ENCODE measurements at regions of chr2 and their contacts with region 1.

Region 1: DNA sequence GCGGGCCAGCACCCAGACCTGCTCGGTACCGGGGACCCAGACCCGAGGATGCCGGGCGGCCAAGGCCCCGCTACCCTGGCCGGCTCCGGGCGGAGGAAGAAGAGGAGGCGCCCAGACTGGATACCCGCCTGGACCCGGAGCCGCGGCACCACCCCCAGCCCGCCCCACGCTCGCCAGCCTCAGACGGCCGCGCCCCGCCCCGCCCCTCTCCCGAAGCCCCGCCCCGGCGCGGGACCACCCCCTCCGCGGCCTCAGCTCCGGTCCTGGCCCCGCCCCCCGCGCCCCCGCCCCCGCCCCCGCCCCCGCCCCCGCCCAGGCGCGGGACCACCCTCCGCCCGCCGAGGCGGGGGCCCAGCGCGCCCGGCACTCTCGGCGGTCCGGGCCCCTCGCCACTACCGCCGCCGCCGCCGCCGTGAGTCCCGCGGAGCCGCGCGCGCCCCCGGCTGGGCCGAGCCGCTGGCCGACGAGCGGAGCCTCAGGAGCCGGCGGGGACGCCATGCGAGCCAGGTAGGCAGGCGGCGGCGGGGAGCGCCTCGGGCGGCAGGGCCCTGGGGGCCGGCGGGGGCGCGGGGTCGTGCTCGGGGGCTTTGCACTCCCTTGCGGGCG is at the start of gene SH3BP4:
- DNase-seq: peak; percentile 54
- ATAC-seq: peak; percentile 79
- H3K4me3 ChIP-seq: peak within 1 kb of the TSS; percentile 74 to 93 (median 76)
- H3K27ac ChIP-seq: peak within 1 kb of the TSS; percentile 56
- H3K4me1 ChIP-seq: peaks cover 57% of the 10 kb centered on the region
- H3K27me3 ChIP-seq: no peaks in the 10 kb centered on the region; a peak in 2 of 5 replicates
- CTCF ChIP-seq: no peak
- EP300 ChIP-seq: no peak
- POLR2A ChIP-seq: peak in 1 of 2 experiments; percentile 50; a peak in 2 of 4 replicates
- RAD21 ChIP-seq: peak; percentile 58; the same call in 1 of the 2 replicates
- total RNA-seq, gene SH3BP4: 34.6 and 44.3 TPM in 2 replicates

Region 2: GRCh38 chr2:234550511-234551107 is 401.2 kb before region 1 on chr2:
- CTCF ChIA-PET with region 1: no interaction called
- POLR2A ChIA-PET with region 1: no interaction called
- in situ Hi-C with region 1: no loop called
- intact Hi-C with region 1: loop called (anchors 2 kb)
- DNase-seq: peak; percentile 73
- ATAC-seq: peak; percentile 88
- H3K4me3 ChIP-seq: no peak overlapping the region
- H3K27ac ChIP-seq: no peak overlapping the region
- H3K4me1 ChIP-seq: peaks cover 33% of the 10 kb centered on the region
- H3K27me3 ChIP-seq: peaks cover 2 to 33% of the 10 kb centered on the region in 2 experiments; a peak in 4 of 5 replicates
- CTCF ChIP-seq: peak; percentile 99
- EP300 ChIP-seq: no peak
- POLR2A ChIP-seq: no peak
- RAD21 ChIP-seq: peak; percentile 97

Region 3: DNA sequence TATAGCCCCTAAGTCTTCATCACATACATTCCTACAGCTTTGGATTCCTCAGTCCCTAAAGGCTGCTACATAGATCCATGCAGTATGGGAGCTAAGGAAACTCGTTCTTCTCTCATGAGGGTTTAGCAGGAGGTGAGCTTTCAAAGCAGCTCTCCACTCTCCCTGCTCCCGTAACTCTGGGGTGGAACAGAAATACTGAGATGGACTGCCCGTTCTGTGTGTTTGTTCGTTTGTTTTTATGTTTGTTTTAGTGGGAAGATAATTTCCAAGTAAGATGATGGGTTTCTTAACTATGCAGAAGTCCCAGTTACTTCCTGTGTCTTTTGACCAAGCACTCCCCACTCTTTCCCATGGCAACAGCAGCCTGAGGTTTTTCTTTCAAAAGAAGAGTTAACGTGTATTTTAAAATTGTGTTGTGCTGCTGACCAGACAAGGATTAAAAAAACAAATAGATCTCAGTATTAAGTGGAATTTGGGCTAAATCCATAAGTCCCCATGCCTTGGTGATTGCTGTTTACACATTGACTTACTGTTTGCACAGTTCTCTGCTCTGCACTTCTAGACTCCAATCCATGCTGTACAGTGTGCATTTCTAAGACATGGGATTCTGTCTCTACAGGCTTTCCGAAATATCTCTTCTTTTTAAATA is 156.4 kb before region 1 on chr2:
- CTCF ChIA-PET with region 1: no interaction called
- POLR2A ChIA-PET with region 1: no interaction called
- in situ Hi-C with region 1: no loop called
- intact Hi-C with region 1: loop called (anchors 5 kb)
- DNase-seq: peak; percentile 73
- ATAC-seq: peak; percentile 95
- H3K4me3 ChIP-seq: peak overlapping the region in 2 of 3 experiments; percentile 42 to 44; a peak in 2 of 6 replicates
- H3K27ac ChIP-seq: peak overlapping the region; percentile 48
- H3K4me1 ChIP-seq: peaks cover 51% of the 10 kb centered on the region
- H3K27me3 ChIP-seq: no peaks in the 10 kb centered on the region
- CTCF ChIP-seq: no peak
- EP300 ChIP-seq: peak in 1 of 2 experiments; percentile 84; a peak in 2 of 4 replicates
- POLR2A ChIP-seq: no peak
- RAD21 ChIP-seq: no peak

Region 4: DNA sequence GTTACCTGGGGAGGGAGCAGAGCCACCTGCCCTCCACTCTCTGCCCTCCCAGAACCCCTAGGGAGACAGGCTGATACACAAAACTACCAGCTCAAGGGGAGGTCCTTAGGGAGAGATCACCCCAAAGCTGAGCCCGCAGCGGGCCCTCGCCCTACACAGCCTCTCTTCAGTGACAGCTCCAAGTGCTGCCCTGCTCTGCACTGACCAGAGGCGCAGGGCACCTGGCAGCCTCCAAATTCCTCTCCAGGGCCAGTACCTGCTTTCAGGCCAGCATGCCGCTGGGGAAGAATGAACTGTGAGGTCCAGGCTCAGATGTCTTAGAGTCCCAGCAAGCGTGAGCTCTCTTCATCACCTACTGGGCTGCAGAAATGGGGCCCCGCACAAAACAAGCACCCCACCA is 11.2 kb before region 1 on chr2:
- CTCF ChIA-PET with region 1: no interaction called
- POLR2A ChIA-PET with region 1: no interaction called
- in situ Hi-C with region 1: no loop called
- intact Hi-C with region 1: no loop called
- DNase-seq: no peak
- ATAC-seq: no peak; the same call in 1 of the 3 replicates
- H3K4me3 ChIP-seq: no peak overlapping the region
- H3K27ac ChIP-seq: no peak overlapping the region
- H3K4me1 ChIP-seq: peaks cover 3% of the 10 kb centered on the region
- H3K27me3 ChIP-seq: peaks cover 6 to 51% of the 10 kb centered on the region in 2 experiments; a peak in 4 of 5 replicates
- CTCF ChIP-seq: no peak
- EP300 ChIP-seq: no peak
- POLR2A ChIP-seq: no peak
- RAD21 ChIP-seq: no peak

Region 5: GRCh38 chr2:234981197-234982117 is 29.7 kb after region 1 on chr2:
- CTCF ChIA-PET with region 1: no interaction called
- POLR2A ChIA-PET with region 1: interaction called, 53 read pairs
- in situ Hi-C with region 1: no loop called
- intact Hi-C with region 1: loop called (anchors 2 kb)
- DNase-seq: peak; percentile 94
- ATAC-seq: peak; percentile 59
- H3K4me3 ChIP-seq: peak overlapping the region; percentile 41 to 64 (median 48)
- H3K27ac ChIP-seq: peak overlapping the region; percentile 88
- H3K4me1 ChIP-seq: peaks cover 100% of the 10 kb centered on the region
- H3K27me3 ChIP-seq: no peaks in the 10 kb centered on the region; a peak in 1 of 5 replicates
- CTCF ChIP-seq: peak; percentile 63
- EP300 ChIP-seq: peak; percentile 3 to 71; a peak in 3 of 4 replicates
- POLR2A ChIP-seq: peak; percentile 27 to 72; a peak in 3 of 4 replicates
- RAD21 ChIP-seq: peak; percentile 36; the same call in 1 of the 2 replicates

Region 6: DNA sequence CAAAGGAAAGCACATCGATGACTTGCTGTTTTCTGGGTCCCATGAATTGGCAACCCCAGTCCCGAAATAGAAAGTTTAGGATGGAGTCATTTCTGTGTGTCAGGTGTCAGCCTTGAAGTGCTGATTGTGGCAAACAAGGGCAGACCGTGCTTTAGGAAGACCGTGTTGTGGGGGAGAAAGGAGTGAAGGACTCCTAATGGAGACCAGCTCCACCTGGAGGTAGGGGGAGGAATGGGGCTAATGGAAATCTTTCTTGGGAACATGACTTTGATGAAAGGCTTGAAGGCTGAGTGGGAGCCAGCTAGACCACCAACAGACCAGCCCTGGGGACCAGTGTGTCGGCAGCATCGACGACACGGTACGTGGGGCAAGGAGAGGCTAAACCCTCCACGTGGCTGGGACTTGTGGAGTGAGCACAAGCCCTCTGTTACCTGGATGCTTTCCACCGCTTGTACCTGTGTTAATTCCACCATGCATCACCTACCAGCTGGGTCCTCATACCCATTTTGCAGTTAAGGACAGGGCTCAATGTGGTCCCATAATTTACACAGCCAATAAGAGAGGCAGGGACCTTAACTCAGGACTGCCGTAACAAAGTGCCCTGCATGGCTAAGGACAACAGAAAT is 104.2 kb after region 1 on chr2:
- CTCF ChIA-PET with region 1: no interaction called
- POLR2A ChIA-PET with region 1: no interaction called
- in situ Hi-C with region 1: no loop called
- intact Hi-C with region 1: loop called (anchors 5 kb)
- DNase-seq: peak; percentile 78
- ATAC-seq: peak; percentile 67
- H3K4me3 ChIP-seq: no peak overlapping the region
- H3K27ac ChIP-seq: no peak overlapping the region
- H3K4me1 ChIP-seq: no peaks in the 10 kb centered on the region
- H3K27me3 ChIP-seq: no peaks in the 10 kb centered on the region
- CTCF ChIP-seq: peak; percentile 91
- EP300 ChIP-seq: no peak; a peak in 1 of 4 replicates
- POLR2A ChIP-seq: peak; percentile 36 to 65; a peak in 2 of 4 replicates
- RAD21 ChIP-seq: peak; percentile 78

Measured in HepG2 (cell line).